AG04450 (cell line): ENCODE measurements at regions of chr2 and their contacts with region 1.

Region 1: GRCh38 chr2:121634354-121635307 is 14.6 kb downstream of the CLASP1 start:
- DNase-seq: no peak
- H3K4me3 ChIP-seq: no peak overlapping the region
- H3K27ac ChIP-seq: peak overlapping the region; percentile 73
- H3K27me3 ChIP-seq: no peaks in the 10 kb centered on the region
- CTCF ChIP-seq: no peak

Region 2: GRCh38 chr2:121649596-121650314 is 15.1 kb after region 1 on chr2:
- CTCF ChIA-PET with region 1: no interaction called
- POLR2A ChIA-PET with region 1: interaction called, 12 read pairs
- DNase-seq: peak; percentile 90
- H3K4me3 ChIP-seq: peak overlapping the region; percentile 65
- H3K27ac ChIP-seq: peak overlapping the region; percentile 92
- H3K27me3 ChIP-seq: no peaks in the 10 kb centered on the region
- CTCF ChIP-seq: no peak

Region 3: DNA sequence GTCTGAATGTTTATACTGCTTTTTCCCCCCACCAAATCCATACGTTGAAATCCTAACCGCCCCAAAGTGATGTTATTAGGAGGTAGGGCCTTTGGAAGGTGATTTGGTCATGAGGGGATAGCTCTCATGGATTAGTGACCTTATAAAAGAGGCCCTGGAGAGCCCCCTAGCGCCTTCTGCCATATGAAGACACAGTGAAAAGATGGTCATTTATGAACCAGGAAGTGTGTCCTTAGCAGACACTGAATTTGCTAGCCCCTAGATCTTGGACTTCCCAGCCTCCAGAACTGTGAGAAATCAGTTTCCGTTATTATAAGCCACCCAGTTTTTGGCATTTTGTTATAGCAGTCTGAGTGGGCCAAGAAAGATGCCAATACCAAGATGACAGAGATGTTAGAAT is 113.6 kb after region 1 on chr2:
- CTCF ChIA-PET with region 1: no interaction called
- POLR2A ChIA-PET with region 1: no interaction called
- DNase-seq: peak; percentile 10
- H3K4me3 ChIP-seq: no peak overlapping the region
- H3K27ac ChIP-seq: no peak overlapping the region
- H3K27me3 ChIP-seq: peaks cover 3% of the 10 kb centered on the region
- CTCF ChIP-seq: peak; percentile 53